ENCODE measurements at regions of chr15 and their contacts with region 1.

Region 1: DNA sequence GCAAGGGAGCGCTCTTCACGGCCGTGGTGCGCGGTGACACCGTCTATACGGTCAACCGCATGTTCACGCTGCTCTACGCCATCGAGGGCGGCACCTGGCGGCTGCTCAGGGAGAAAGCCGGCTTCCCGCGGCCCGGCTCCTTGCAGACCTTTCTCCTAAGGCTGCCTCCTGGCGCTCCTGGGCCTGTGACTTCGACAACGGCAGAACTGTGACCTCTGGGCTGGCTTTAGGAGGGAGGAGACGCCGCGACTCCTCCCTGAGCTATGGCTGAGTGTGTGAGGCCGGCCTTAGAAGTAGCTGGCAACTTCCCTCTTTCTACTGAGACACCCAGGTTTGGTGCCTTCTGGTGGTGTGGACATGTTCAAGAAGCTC is 1.4 kb downstream of the KBTBD13 start:
- DNase-seq: peak; percentile 34
- H3K4me3 Mint-ChIP-seq: no peak overlapping the region
- H3K27ac Mint-ChIP-seq: no peak overlapping the region
- H3K4me1 Mint-ChIP-seq: peaks cover 12% of the 10 kb centered on the region
- H3K27me3 Mint-ChIP-seq: peaks cover 27% of the 10 kb centered on the region

Region 2: DNA sequence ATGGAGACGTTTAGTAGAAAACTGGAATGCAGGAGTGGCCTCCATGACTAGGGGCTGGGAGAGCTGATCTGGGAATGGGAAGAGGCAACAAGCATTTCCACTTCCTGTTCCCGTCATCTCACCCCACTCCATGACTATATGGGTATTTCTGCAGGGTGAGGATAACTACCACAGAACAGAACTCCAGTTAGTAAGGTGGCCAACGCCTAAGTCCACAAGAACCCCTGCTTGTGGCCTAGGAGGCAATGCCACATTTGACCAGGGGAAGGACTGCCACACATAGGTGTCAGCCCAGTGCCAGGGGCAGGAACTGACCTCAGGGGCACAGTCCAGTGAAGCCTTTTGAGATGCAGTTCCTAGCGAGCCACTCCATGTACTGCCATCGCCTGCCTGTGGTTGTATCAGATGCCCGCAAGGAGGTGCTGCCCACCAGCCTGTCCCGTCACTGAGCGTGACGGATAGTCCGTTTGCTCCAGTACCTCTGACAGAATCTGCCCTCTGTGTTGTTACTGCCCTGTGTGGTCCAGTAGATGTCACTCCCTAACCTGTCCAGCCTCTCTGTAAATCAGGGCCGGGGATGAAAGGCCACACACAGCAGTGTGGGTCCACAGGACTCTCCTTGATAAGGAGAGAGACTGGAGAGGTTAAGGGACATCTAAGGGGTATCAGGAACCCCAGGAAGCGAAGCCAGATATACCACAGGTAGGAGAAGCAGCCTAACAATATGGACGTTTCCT is 45.0 kb before region 1 on chr15:
- intact Hi-C with region 1: loop called (anchors 2 kb)
- DNase-seq: peak; percentile 20
- H3K4me3 Mint-ChIP-seq: no peak overlapping the region
- H3K27ac Mint-ChIP-seq: no peak overlapping the region
- H3K4me1 Mint-ChIP-seq: peaks cover 18% of the 10 kb centered on the region
- H3K27me3 Mint-ChIP-seq: peaks cover 14% of the 10 kb centered on the region